CD14-positive monocyte (primary cell): ENCODE measurements at regions of chr13 and their contacts with region 1.

Region 1: GRCh38 chr13:99228737-99229691 is 28.4 kb downstream of the UBAC2 start:
- DNase-seq: peak; percentile 37 to 51 (median 38)
- H3K4me3 ChIP-seq: peak overlapping the region in 2 of 3 experiments; percentile 3 to 29
- H3K4me3 Mint-ChIP-seq: peak overlapping the region; percentile 43 to 52
- H3K27ac ChIP-seq: peak overlapping the region; percentile 80 to 88
- H3K27ac Mint-ChIP-seq: peak overlapping the region; percentile 87 to 98 (median 94)
- H3K4me1 ChIP-seq: peaks cover 78 to 88% of the 10 kb centered on the region in 2 donors
- H3K4me1 Mint-ChIP-seq: peaks cover 79% of the 10 kb centered on the region
- H3K27me3 ChIP-seq: no peaks in the 10 kb centered on the region
- H3K27me3 Mint-ChIP-seq: peaks cover 0 to 3% (median 0%) of the 10 kb centered on the region in 3 donors
- CTCF ChIP-seq: no peak

Region 2: GRCh38 chr13:98576963-98577822 is 651.8 kb before region 1 on chr13 and contains the start of gene STK24:
- intact Hi-C with region 1: loop called in 1 of 2 experiments (anchors 10 kb)
- DNase-seq: peak; percentile 66 to 71 (median 67)
- H3K4me3 ChIP-seq: peak within 1 kb of the TSS; percentile 69 to 89 (median 89)
- H3K4me3 Mint-ChIP-seq: peak within 1 kb of the TSS; percentile 90 to 97
- H3K27ac ChIP-seq: peak within 1 kb of the TSS; percentile 97
- H3K27ac Mint-ChIP-seq: peak within 1 kb of the TSS; percentile 97 to 99 (median 98)
- H3K4me1 ChIP-seq: peaks cover 33 to 46% of the 10 kb centered on the region in 2 donors
- H3K4me1 Mint-ChIP-seq: peaks cover 53% of the 10 kb centered on the region
- H3K27me3 ChIP-seq: no peaks in the 10 kb centered on the region
- H3K27me3 Mint-ChIP-seq: peaks cover 0 to 1% (median 0%) of the 10 kb centered on the region in 3 donors
- CTCF ChIP-seq: no peak
- polyA plus RNA-seq, gene STK24: 14.2 to 59.8 (median 28.9) TPM

Region 3: DNA sequence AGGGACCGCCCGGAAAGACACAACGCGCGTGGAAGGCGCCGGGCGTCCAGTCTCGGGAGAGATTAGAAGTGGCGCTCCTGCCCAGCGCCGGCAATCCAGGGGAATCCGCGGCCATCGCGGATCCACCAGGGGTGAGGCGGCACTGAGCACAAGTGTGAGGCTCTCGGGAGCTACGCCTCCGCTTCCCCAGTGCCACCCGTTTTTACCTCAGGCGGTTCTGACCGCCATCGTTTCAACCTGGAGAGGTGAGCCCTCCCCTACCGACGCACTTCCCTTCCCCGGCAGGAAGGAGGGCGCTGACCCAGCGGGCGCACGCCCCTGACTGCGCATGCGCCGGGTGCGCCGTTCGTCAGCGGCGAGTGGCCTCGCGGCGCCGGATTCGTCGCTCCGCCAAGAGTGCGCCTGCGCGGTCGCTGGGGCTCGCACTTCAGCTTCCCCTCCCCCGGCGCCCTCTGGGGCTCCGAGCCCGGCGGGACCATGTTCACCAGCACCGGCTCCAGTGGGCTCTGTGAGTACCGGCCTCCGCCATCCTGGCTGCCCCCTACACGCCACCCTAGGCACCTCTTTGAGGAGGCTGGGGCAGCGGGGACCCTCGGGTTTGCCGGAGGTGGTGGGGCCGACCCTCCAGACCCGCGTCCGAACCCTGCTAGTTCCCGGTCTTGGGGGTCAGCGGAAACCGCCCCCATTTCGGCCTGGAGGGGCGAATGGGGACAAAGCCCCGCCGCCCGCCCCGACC is 28.4 kb before region 1 on chr13 and contains the start of gene UBAC2:
- intact Hi-C with region 1: loop called in 1 of 2 experiments (anchors 2 kb)
- DNase-seq: peak; percentile 94 to 97 (median 96)
- H3K4me3 ChIP-seq: peak within 1 kb of the TSS; percentile 69 to 97 (median 95)
- H3K4me3 Mint-ChIP-seq: peak within 1 kb of the TSS; percentile 91 to 100
- H3K27ac ChIP-seq: peak within 1 kb of the TSS; percentile 96 to 99
- H3K27ac Mint-ChIP-seq: peak within 1 kb of the TSS; percentile 94 to 99 (median 98)
- H3K4me1 ChIP-seq: peaks cover 32 to 44% of the 10 kb centered on the region in 2 donors
- H3K4me1 Mint-ChIP-seq: peaks cover 43% of the 10 kb centered on the region
- H3K27me3 ChIP-seq: no peaks in the 10 kb centered on the region
- H3K27me3 Mint-ChIP-seq: peaks cover 0 to 3% (median 2%) of the 10 kb centered on the region in 3 donors
- CTCF ChIP-seq: no peak
- polyA plus RNA-seq, gene UBAC2: 59.6 to 113 (median 96.7) TPM

Region 4: GRCh38 chr13:99264051-99264450 is 35.0 kb after region 1 on chr13:
- intact Hi-C with region 1: loop called (anchors 5 kb)
- DNase-seq: peak in 2 of 3 donors; percentile 33 to 44
- H3K4me3 ChIP-seq: no peak overlapping the region
- H3K4me3 Mint-ChIP-seq: no peak overlapping the region
- H3K27ac ChIP-seq: peak overlapping the region; percentile 9 to 52
- H3K27ac Mint-ChIP-seq: peak overlapping the region in 5 of 7 donors; percentile 13 to 87 (median 76)
- H3K4me1 ChIP-seq: peaks cover 31 to 49% of the 10 kb centered on the region in 2 donors
- H3K4me1 Mint-ChIP-seq: peaks cover 55% of the 10 kb centered on the region
- H3K27me3 ChIP-seq: no peaks in the 10 kb centered on the region
- H3K27me3 Mint-ChIP-seq: no peaks in the 10 kb centered on the region
- CTCF ChIP-seq: no peak